ENCODE measurements at regions of chr16 and their contacts with region 1.

Region 1: GRCh38 chr16:84754353-84754856 is 54.6 kb downstream of the USP10 start:
- DNase-seq: no peak
- H3K4me3 ChIP-seq: peak overlapping the region in 1 of 2 donors; percentile 13
- H3K27ac ChIP-seq: peak overlapping the region; percentile 40
- H3K4me1 ChIP-seq: peaks cover 35% of the 10 kb centered on the region
- H3K27me3 ChIP-seq: no peaks in the 10 kb centered on the region
- CTCF ChIP-seq: peak; percentile 69 to 88 (median 80)
- POLR2A ChIP-seq: no peak

Region 2: DNA sequence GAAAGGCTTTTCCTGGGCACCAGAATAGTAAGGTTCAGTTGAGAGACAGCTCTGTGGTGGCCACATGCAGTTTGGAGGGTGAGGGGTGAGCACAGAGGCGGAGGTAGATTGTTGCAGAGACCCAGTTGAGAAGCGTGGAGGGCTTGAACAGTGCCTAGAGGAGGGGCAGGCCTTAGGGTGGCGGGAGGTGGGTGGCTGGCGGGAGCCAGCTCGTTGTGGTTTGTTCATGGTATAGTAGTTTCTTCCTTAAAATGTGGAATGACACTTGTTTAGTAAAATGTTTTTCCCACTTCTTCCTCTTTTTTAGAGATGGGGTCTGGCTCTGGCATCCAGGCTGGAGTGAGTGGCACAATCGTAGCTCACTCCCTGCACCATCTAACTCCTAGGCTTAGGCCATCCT is 40.4 kb before region 1 on chr16:
- intact Hi-C with region 1: no loop called
- DNase-seq: peak in 1 of 2 donors; percentile 60
- H3K4me3 ChIP-seq: no peak overlapping the region
- H3K27ac ChIP-seq: no peak overlapping the region
- H3K4me1 ChIP-seq: peaks cover 24% of the 10 kb centered on the region
- H3K27me3 ChIP-seq: no peaks in the 10 kb centered on the region
- CTCF ChIP-seq: no peak
- POLR2A ChIP-seq: no peak

Region 3: GRCh38 chr16:84952335-84953189 is 198.2 kb after region 1 on chr16:
- intact Hi-C with region 1: loop called (anchors 5 kb)
- DNase-seq: no peak
- H3K4me3 ChIP-seq: no peak overlapping the region
- H3K27ac ChIP-seq: peak overlapping the region; percentile 76
- H3K4me1 ChIP-seq: peaks cover 26% of the 10 kb centered on the region
- H3K27me3 ChIP-seq: no peaks in the 10 kb centered on the region
- CTCF ChIP-seq: peak; percentile 81 to 94 (median 92)
- POLR2A ChIP-seq: no peak

Region 4: GRCh38 chr16:84967828-84968227 is 213.4 kb after region 1 on chr16:
- intact Hi-C with region 1: loop called (anchors 5 kb)
- DNase-seq: no peak
- H3K4me3 ChIP-seq: no peak overlapping the region
- H3K27ac ChIP-seq: no peak overlapping the region
- H3K4me1 ChIP-seq: peaks cover 7% of the 10 kb centered on the region
- H3K27me3 ChIP-seq: no peaks in the 10 kb centered on the region
- CTCF ChIP-seq: no peak
- POLR2A ChIP-seq: no peak